ENCODE measurements at regions of chr2 and their contacts with region 1.

Region 1: DNA sequence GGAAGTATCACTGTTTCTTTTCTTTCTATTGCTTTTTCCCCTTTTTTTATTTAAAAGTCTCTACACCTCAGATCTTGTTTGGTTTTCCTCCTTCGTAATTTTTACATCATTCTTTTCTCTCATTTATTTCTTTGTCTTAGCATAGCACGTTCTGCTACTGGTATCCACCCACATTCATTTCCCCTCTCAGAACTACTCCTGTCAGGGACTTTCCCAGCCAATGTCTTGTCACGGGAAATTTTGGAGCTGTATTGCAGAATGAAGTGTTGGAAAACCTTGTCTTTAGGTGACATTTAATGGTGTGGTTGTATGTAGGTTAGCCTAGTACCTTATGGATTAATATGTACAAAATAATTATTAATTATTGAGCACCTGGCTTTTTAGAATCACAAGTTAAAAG is 34.0 kb downstream of the TTLL4 start:
- DNase-seq: no peak
- H3K4me3 Mint-ChIP-seq: peak overlapping the region; percentile 28
- H3K27ac Mint-ChIP-seq: peak overlapping the region; percentile 81
- H3K4me1 Mint-ChIP-seq: peaks cover 22% of the 10 kb centered on the region
- H3K27me3 Mint-ChIP-seq: no peaks in the 10 kb centered on the region

Region 2: DNA sequence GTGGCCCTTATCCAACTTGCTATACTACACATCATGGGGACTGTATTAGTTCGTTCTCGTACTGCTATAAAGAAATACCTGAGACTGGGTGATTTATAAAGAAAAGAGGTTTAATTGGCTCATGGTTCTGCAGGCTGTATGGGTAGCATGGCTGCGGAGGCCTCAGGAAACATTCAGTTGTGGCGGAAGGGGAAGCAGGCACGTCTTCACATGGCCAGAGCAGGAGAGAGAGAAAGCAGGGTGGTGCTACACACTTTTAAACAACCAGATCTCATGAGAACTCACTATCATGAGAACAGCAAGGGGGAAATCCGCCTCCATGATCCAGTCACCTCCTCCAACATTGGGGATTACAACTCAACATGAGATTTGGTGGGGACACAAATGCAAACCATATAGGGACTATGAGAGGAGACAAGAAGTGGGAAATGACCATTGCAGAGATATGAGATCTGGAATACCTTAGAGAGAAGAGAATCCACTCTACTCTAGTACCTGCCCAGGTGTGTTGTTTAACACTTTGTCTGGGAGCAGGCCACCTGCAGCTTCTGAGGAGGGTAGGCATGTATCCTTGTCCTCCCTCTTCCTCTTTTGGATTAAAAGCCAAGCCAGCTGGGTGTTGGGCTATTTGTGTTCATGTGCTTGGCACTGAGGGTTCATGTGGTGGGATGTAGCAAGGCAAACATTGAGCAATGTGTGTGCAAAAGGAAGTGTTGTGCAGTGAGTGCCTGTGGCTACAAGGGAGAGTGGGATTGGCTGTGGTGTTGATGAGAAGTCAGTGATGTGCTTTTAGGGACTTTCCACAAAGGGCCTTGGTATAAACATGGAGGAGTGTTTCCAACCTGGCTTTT is 11.2 kb before region 1 on chr2:
- intact Hi-C with region 1: loop called (anchors 1 kb)
- DNase-seq: peak; percentile 83
- H3K4me3 Mint-ChIP-seq: peak overlapping the region; percentile 32
- H3K27ac Mint-ChIP-seq: peak overlapping the region; percentile 80
- H3K4me1 Mint-ChIP-seq: peaks cover 34% of the 10 kb centered on the region
- H3K27me3 Mint-ChIP-seq: no peaks in the 10 kb centered on the region

Region 3: DNA sequence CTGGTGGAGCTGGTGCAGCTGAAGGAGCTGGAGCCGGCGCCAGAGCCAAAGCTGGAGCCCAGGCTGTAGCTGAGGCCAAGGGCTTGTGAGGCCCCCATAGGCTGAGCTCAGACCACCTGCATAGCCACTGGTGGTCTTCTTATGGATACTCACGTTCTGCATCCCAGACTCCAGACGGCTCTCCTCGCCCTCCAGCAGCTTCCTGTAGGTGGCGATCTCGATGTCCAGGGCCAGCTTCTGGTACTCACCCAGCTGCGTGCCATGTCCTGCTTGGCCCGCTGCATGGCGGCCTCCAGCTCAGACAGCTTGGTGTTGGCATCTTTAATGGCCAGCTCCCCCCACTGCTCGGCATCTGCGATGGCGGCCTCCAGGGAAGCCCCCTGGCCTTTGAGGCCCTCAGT is 208.9 kb after region 1 on chr2:
- intact Hi-C with region 1: no loop called
- DNase-seq: no peak
- H3K4me3 Mint-ChIP-seq: no peak overlapping the region
- H3K27ac Mint-ChIP-seq: no peak overlapping the region
- H3K4me1 Mint-ChIP-seq: no peaks in the 10 kb centered on the region
- H3K27me3 Mint-ChIP-seq: peaks cover 51% of the 10 kb centered on the region

Measured in activated CD4-positive, alpha-beta T cell treated with anti-CD3 and anti-CD28 coated beads, Interleukin-2, amount 10 ng/mL, durations not matched to agents 24 days and 14 days (primary cell).